WTC11 (cell line): ENCODE measurements at regions of chr11 and their contacts with region 1.

Region 1: DNA sequence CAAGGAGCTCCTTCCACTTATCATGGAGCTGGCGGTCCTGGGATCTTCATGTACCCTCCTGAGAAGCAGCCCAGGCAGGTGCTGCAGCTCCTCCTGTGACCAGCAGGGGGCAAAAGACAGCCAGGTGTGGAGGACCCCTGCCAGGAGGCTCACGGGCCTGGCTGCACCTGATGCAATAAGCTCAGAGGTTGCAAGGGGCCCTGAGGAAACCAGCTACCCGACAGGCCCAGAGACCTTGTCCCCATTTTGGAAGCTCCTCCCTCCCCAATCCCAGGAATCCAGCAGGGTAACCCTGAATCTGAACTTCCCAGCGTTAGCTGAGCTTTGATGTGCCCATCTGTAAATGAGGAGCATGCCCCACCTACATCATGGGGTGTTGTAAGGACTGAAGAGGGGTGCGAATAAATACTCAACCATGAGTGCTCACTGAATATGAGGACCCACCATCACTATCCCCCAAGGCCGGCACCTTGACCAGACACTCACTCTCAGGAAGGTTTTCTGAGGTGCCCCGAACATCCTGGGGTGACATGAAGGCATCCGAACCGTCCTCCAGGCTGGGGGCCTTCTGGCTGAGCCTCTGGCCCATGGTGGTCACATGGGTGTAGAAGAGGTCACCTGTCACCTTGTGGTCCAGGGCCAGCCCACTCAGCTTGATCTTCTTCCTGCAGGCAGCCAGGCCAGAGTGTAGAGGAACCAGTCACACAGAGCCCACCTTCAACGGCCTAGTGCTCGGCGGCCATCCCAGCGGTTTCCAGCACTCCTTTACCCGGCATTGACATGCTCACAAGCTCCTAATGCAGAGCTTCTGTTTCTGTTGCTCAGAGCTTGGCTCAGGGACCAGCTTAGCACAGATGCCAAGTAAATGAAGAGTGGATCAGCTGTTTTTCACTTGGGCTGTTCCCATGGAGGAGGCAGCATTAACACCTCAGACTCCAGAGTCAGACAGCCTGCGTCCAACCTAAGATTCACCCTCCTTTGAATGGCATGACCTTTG is 21.7 kb downstream of the SLC43A1 start:
- DNase-seq: peak; percentile 95
- ATAC-seq: peak; percentile 83
- H3K4me3 Mint-ChIP-seq: no peak overlapping the region
- H3K27ac Mint-ChIP-seq: peak overlapping the region; percentile 96
- H3K4me1 Mint-ChIP-seq: peaks cover 15% of the 10 kb centered on the region
- H3K27me3 Mint-ChIP-seq: no peaks in the 10 kb centered on the region; the same call in 1 of the 2 replicates
- CTCF ChIP-seq: peak; percentile 93

Region 2: DNA sequence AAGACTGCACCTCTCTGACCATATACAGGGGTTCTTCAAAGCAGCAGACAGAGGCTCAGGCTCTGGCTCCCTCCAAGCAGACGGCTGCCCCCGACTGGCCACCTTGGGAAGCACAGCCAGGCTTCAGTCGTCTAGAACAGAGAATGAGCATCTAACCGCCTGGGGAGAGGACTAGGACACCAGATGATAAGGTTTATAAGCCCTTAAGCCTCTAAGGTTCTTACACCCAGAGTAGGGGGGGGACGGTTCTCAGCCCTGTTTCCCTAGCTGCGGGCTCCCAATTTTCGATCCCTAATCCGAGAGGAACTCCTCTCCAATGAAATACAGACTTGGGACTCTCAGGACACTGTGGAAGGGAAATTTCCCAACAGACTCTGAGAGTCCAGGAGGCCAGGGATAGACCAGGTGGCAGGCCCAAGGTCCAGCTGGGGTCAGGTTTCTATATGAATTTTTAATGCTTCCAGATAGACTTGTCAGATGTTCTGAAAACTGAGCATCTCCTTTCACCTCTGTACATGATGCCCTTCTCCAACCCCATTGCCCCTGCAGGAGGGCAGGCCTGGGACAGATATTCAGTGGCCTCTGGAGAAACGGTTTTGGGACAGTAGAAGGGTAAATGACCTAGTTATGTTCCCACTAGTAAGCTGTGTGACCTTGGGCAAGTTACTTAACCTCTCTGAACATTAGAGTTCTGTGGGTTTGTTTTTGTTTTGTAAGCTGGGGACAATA is 13.2 kb before region 1 on chr11:
- CTCF ChIA-PET with region 1: interaction called, 97 read pairs
- POLR2A ChIA-PET with region 1: interaction called, 12 read pairs
- DNase-seq: peak; percentile 93
- ATAC-seq: peak; percentile 60
- H3K4me3 Mint-ChIP-seq: no peak overlapping the region
- H3K27ac Mint-ChIP-seq: 0 out of 2 replicates have a peak overlapping the region, but pooled peaks have one; percentile 14
- H3K4me1 Mint-ChIP-seq: peaks cover 56% of the 10 kb centered on the region
- H3K27me3 Mint-ChIP-seq: peaks cover 74% of the 10 kb centered on the region
- CTCF ChIP-seq: peak; percentile 73

Region 3: GRCh38 chr11:57515332-57516060 is 21.7 kb after region 1 on chr11 and contains the start of gene SLC43A1:
- CTCF ChIA-PET with region 1: interaction called, 147 read pairs
- POLR2A ChIA-PET with region 1: interaction called, 37 read pairs
- DNase-seq: peak; percentile 54
- ATAC-seq: peak; percentile 29
- H3K4me3 Mint-ChIP-seq: peak within 1 kb of the TSS; percentile 93
- H3K27ac Mint-ChIP-seq: no peak within 1 kb of the TSS
- H3K4me1 Mint-ChIP-seq: peaks cover 20% of the 10 kb centered on the region
- H3K27me3 Mint-ChIP-seq: peaks cover 22% of the 10 kb centered on the region
- CTCF ChIP-seq: no peak
- total RNA-seq, gene SLC43A1: 20.5 to 27.1 TPM (median 21.5 TPM) in 3 replicates

Region 4: GRCh38 chr11:57530596-57531507 is 37.0 kb after region 1 on chr11 and contains the start of gene TIMM10:
- CTCF ChIA-PET with region 1: interaction called, 260 read pairs
- POLR2A ChIA-PET with region 1: interaction called, 14 read pairs
- DNase-seq: peak; percentile 94
- ATAC-seq: peak; percentile 98
- H3K4me3 Mint-ChIP-seq: peak within 1 kb of the TSS; percentile 96
- H3K27ac Mint-ChIP-seq: peak within 1 kb of the TSS; percentile 98
- H3K4me1 Mint-ChIP-seq: peaks cover 18% of the 10 kb centered on the region
- H3K27me3 Mint-ChIP-seq: peaks cover 9% of the 10 kb centered on the region
- CTCF ChIP-seq: no peak
- total RNA-seq, gene TIMM10: 63.5 to 92.8 TPM (median 68.4 TPM) in 3 replicates

Region 5: DNA sequence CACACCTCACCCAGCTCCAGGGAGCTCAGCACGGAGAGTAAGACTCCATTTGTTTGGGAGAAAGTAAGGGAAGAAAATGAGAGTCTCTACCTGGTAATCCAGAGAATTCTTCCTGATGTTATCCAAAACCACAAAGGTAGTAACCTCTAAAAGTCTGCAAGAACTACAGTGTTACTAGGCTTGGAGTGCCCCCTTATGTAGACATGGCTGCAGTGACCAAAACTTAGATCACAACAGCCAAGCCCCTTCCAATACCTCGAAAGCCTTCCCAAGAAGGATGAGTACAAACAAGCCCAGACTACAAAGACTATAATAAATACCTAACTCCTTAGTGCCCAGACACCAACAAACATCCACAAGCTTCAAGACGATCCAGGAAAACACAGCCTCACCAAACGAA is 68.8 kb after region 1 on chr11:
- CTCF ChIA-PET with region 1: interaction called, 13 read pairs
- POLR2A ChIA-PET with region 1: no interaction called
- DNase-seq: no peak
- ATAC-seq: peak; percentile 76
- H3K4me3 Mint-ChIP-seq: no peak overlapping the region
- H3K27ac Mint-ChIP-seq: peak overlapping the region; percentile 24; the same call in 1 of the 2 replicates
- H3K4me1 Mint-ChIP-seq: peaks cover 22% of the 10 kb centered on the region
- H3K27me3 Mint-ChIP-seq: peaks cover 4% of the 10 kb centered on the region; the same call in 1 of the 2 replicates
- CTCF ChIP-seq: no peak